Activated B cell treated with CpG ODN at 0.5 μM for 24 hours (primary cell): ENCODE measurements at regions of chr2 and their contacts with region 1.

Region 1: DNA sequence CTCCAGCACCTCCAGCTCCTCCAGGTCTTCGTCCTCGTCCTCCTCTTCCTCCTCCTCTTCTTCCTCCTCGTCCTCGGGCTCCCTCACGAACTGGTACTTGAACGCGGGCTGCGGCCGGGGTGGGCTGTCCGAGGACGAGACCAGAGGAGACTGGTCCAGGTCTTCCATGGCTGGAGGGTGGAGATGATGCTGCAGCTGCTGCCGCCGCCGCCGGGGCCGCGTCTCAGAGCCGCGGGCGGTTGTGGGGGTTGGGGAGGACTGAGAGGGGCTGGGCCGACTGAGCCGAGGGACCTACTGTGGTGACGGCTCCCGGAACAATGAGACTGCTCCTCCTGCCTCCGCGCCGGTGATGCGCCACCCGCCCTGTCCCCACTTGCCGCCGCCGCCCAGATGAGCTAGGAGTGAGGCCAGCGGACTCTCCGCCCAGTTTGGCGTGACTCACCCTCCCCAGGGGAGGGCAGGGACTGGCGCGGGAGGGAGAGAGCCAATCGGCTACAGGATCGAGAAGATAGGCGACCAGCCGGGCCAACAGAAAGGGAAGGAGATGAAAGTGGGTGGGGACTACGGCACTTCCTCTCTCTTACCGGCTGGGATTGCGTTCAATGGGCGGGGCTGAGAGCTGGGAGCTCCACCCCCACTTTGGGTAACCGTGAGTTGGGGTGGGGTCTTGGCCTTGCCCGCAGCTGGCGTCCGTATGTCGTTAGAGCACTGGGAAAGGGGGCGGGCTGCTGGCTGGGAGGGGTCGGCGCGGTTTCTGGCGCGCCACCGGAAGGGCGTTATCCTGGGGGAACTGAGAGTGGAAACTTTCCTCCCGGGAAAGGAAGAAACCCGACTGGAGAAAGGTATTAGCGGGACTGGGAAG is at the start of gene RTN4:
- DNase-seq: peak; percentile 98
- ATAC-seq: peak; percentile 86
- H3K4me3 Mint-ChIP-seq: peak within 1 kb of the TSS; percentile 96
- H3K27ac Mint-ChIP-seq: peak within 1 kb of the TSS; percentile 99
- H3K4me1 Mint-ChIP-seq: peaks cover 70% of the 10 kb centered on the region
- H3K27me3 Mint-ChIP-seq: no peaks in the 10 kb centered on the region
- CTCF ChIP-seq: no peak
- total RNA-seq, gene RTN4: 60.5 and 60.6 TPM in 2 replicates

Region 2: GRCh38 chr2:53559302-53559967 is 1490.9 kb before region 1 on chr2:
- CTCF ChIA-PET with region 1: no interaction called
- POLR2A ChIA-PET with region 1: no interaction called
- intact Hi-C with region 1: no loop called
- DNase-seq: no peak
- ATAC-seq: no peak
- H3K4me3 Mint-ChIP-seq: no peak overlapping the region
- H3K27ac Mint-ChIP-seq: no peak overlapping the region
- H3K4me1 Mint-ChIP-seq: no peaks in the 10 kb centered on the region
- H3K27me3 Mint-ChIP-seq: no peaks in the 10 kb centered on the region
- CTCF ChIP-seq: no peak

Region 3: DNA sequence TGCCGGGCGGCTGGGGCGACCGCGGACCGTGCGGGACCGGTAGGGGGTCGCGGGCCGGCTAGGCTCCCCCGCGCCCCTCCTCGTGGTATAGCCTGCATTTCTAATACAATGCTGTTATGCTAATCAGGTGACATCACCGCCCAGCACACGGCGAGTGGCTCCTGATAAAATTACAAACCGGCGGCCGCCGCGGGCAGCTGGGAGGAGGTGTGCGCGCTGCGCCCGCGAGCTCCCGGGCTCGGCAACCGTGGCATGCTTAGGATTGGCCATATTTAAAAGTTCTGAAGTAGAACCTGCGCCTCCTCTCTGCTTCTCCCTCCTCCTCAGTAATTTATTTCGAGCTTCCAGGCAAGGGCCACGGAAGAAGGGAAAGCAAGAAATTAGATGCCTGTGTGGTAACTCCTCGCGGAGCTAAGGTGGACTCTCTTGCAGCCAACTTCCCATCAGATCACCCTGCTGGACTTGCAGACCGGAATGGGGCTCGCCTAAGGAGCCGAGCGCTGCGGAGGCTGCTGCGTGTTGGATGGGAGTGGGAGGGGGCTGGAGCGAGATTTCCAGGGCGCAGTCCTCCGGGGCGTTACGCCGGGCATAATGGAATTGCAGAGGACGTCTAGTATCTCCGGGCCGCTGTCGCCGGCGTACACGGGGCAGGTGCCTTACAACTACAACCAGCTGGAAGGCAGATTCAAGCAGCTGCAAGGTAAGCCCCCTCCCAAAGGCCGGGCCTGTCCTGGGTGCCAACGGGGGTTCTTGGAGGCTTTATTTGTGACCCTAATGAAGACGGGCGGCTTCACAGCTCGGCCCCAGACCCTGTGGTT is 492.0 kb before region 1 on chr2:
- CTCF ChIA-PET with region 1: no interaction called
- POLR2A ChIA-PET with region 1: interaction called, 9 read pairs
- intact Hi-C with region 1: loop called (anchors 10 kb)
- DNase-seq: peak; percentile 60
- ATAC-seq: peak; percentile 60
- H3K4me3 Mint-ChIP-seq: peak overlapping the region; percentile 89
- H3K27ac Mint-ChIP-seq: peak overlapping the region; percentile 94
- H3K4me1 Mint-ChIP-seq: peaks cover 50% of the 10 kb centered on the region
- H3K27me3 Mint-ChIP-seq: no peaks in the 10 kb centered on the region
- CTCF ChIP-seq: no peak

Region 4: GRCh38 chr2:55014962-55015939 is 35.1 kb before region 1 on chr2:
- CTCF ChIA-PET with region 1: interaction called, 7 read pairs
- POLR2A ChIA-PET with region 1: interaction called, 7 read pairs
- intact Hi-C with region 1: loop called (anchors 2 kb)
- DNase-seq: no peak
- ATAC-seq: no peak
- H3K4me3 Mint-ChIP-seq: no peak overlapping the region
- H3K27ac Mint-ChIP-seq: no peak overlapping the region
- H3K4me1 Mint-ChIP-seq: peaks cover 52% of the 10 kb centered on the region
- H3K27me3 Mint-ChIP-seq: no peaks in the 10 kb centered on the region
- CTCF ChIP-seq: peak; percentile 49

Region 5: GRCh38 chr2:55150834-55151233 is 100.5 kb after region 1 on chr2:
- CTCF ChIA-PET with region 1: interaction called, 3 read pairs
- POLR2A ChIA-PET with region 1: interaction called, 45 read pairs
- intact Hi-C with region 1: loop called (anchors 5 kb)
- DNase-seq: no peak
- ATAC-seq: peak; percentile 89
- H3K4me3 Mint-ChIP-seq: no peak overlapping the region
- H3K27ac Mint-ChIP-seq: peak overlapping the region; percentile 84
- H3K4me1 Mint-ChIP-seq: peaks cover 54% of the 10 kb centered on the region
- H3K27me3 Mint-ChIP-seq: no peaks in the 10 kb centered on the region
- CTCF ChIP-seq: no peak

Region 6: DNA sequence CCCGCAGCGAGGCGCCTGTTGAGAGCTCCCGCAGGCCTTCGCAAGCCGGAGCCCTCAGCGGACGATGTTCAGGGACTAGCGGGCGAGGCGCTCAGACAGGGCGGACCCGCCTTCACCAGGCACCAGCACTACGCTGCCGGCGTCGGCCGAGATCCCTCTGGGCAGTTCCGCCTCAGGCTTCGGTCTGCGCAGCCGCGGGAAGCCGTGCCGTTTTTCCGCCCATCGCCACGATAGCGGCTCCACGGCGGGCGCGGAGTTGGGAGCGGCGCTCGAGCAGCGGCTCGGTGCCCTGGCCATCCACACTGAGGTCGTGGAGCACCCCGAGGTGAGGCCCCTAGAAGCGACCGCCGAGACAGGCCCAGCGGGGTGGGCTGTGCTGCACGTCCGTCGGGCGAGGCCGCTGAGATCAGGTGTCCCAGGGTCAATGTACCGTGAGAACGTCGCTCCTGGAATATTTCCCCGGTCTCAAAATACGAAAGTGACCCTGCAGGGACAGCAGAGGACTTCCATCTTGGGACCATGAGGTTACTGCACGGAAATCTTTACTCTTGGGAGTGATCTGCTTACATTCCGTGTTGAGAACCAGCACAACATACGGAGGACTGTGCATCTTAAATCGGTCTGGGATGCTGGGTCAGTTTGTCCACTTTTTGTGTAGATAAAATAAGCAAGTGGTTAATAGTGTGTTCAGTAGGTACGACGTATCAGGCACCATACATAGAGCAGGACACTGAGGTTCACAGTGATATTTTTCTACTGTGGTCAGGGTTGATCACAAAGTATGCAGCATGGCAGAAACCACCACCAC is 231.9 kb after region 1 on chr2:
- CTCF ChIA-PET with region 1: no interaction called
- POLR2A ChIA-PET with region 1: interaction called, 3 read pairs
- intact Hi-C with region 1: loop called (anchors 1 kb)
- DNase-seq: peak; percentile 83
- ATAC-seq: peak; percentile 99
- H3K4me3 Mint-ChIP-seq: peak overlapping the region; percentile 88
- H3K27ac Mint-ChIP-seq: peak overlapping the region; percentile 93
- H3K4me1 Mint-ChIP-seq: peaks cover 28% of the 10 kb centered on the region
- H3K27me3 Mint-ChIP-seq: no peaks in the 10 kb centered on the region
- CTCF ChIP-seq: no peak